AG04450 (cell line): ENCODE measurements at regions of chr2 and their contacts with region 1.

Region 1: DNA sequence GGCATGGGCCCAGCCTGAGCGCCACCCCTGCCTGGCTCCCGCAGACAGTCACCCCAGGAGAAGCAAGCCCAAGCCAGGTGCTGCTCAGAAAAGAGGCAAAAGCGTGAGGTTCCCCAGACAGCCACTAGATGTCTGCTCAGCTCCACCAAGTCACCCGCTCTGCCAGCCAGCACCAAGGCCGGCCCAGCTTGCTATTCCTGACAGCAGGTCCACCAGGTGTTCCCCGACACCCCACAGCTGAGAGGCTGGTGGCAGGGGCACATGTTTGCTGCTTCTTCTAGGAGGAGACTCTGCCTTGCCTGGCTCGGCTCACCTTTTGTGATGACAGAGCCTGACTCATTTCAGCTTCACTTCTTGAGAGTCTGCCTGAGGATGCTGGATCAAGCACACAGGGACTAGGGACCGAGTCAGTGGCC is 206.7 kb downstream of the MGAT5 start:
- DNase-seq: peak; percentile 18
- H3K4me3 ChIP-seq: no peak overlapping the region
- H3K27ac ChIP-seq: no peak overlapping the region
- H3K27me3 ChIP-seq: peaks cover 3% of the 10 kb centered on the region
- CTCF ChIP-seq: peak; percentile 73

Region 2: DNA sequence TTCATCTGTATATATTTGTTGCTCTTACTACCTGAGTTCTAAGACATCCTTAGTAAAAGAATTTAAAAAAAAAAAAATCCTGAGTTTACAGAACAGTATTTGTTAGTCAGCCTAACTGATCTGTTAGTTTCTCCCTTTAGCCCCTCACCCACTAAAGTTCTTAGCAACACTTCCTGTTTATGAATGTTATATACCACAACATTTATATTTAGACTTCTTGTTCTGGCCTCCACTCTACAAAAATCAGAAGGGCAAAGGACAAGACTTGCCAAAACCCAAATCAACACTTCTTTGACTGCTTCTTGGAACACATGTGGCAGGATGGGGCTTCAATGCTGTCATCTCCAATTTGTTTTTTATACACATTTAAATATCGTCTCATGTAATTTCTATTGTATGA is 135.6 kb before region 1 on chr2:
- CTCF ChIA-PET with region 1: no interaction called
- POLR2A ChIA-PET with region 1: no interaction called
- DNase-seq: no peak
- H3K4me3 ChIP-seq: no peak overlapping the region
- H3K27ac ChIP-seq: no peak overlapping the region
- H3K27me3 ChIP-seq: no peaks in the 10 kb centered on the region
- CTCF ChIP-seq: no peak

Region 3: GRCh38 chr2:134683561-134684112 is 223.0 kb after region 1 on chr2:
- CTCF ChIA-PET with region 1: no interaction called
- POLR2A ChIA-PET with region 1: no interaction called
- DNase-seq: no peak
- H3K4me3 ChIP-seq: no peak overlapping the region
- H3K27ac ChIP-seq: no peak overlapping the region
- H3K27me3 ChIP-seq: no peaks in the 10 kb centered on the region
- CTCF ChIP-seq: no peak

Region 4: GRCh38 chr2:134892282-134893070 is 431.9 kb after region 1 on chr2:
- CTCF ChIA-PET with region 1: interaction called, 20 read pairs
- POLR2A ChIA-PET with region 1: no interaction called
- DNase-seq: no peak
- H3K4me3 ChIP-seq: no peak overlapping the region
- H3K27ac ChIP-seq: no peak overlapping the region
- H3K27me3 ChIP-seq: no peaks in the 10 kb centered on the region
- CTCF ChIP-seq: no peak

Region 5: DNA sequence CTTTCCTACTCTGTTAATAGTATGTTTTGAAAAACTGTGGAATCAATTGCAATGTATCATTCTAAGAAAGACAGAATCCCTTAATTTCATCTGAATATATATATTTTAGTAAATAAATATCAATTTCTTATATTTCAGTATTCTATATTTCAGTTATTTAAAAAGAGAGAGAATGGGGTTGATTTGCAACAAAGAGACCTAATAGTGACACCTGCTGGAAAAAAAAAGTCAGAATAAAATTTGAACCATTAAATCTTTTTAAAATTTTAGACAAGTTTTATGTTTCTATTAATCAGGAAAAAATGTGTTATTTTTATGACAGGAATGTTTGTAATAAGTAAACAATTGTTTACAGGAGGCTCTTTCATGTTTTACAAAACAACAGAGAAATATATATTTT is 437.3 kb after region 1 on chr2:
- CTCF ChIA-PET with region 1: interaction called, 20 read pairs
- POLR2A ChIA-PET with region 1: no interaction called
- DNase-seq: no peak
- H3K4me3 ChIP-seq: no peak overlapping the region
- H3K27ac ChIP-seq: no peak overlapping the region
- H3K27me3 ChIP-seq: no peaks in the 10 kb centered on the region
- CTCF ChIP-seq: peak; percentile 43

Region 6: GRCh38 chr2:134926231-134926931 is 465.8 kb after region 1 on chr2:
- CTCF ChIA-PET with region 1: interaction called, 13 read pairs
- POLR2A ChIA-PET with region 1: no interaction called
- DNase-seq: no peak
- H3K4me3 ChIP-seq: no peak overlapping the region
- H3K27ac ChIP-seq: no peak overlapping the region
- H3K27me3 ChIP-seq: no peaks in the 10 kb centered on the region
- CTCF ChIP-seq: no peak